ENCODE measurements at regions of chr1 and their contacts with region 1.

Region 1: DNA sequence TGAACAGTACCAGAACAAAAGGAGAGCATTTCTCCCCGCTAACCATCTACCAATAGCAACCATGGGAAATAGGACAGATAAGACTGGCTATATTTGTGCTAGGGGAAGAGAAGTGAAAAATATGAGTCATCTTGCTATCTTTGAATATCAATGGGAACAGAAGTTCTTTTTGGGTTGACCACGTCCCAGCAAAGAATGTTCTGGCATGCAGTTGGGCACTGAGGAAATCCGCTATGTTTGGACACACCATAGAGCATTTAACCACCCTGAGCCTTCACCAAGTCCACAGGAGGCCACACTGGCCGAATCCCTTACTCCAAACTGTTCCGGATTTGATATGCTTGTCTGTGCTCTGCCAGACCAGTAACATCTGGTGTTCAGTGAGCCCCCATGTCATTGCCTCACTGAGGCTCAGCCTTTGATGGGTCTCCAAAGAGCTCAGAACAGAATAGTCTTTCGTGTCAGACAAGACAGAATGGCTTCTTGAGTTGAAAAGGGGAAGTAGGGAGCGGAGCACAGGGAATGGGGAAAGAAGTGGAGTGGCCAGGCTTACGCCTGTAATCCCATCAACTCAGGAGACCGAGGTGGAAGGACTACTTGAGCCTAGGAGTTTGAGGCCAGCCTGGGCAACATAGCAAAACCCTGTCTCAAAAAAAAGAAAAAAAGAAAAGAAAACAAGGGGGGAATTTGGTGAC is 81.4 kb downstream of the SMYD2 start:
- DNase-seq: peak; percentile 81 to 90
- ATAC-seq: peak; percentile 92 to 96
- H3K4me3 ChIP-seq: peak overlapping the region in 2 of 4 donors; percentile 3 to 8
- H3K27ac ChIP-seq: peak overlapping the region; percentile 87 to 97 (median 91)
- H3K4me1 ChIP-seq: peaks cover 40 to 57% of the 10 kb centered on the region in 2 donors
- H3K27me3 ChIP-seq: no peaks in the 10 kb centered on the region
- CTCF ChIP-seq: no peak
- POLR2A ChIP-seq: peak; percentile 24 to 40

Region 2: GRCh38 chr1:214551436-214552173 is 189.3 kb after region 1 on chr1 and contains the start of gene PTPN14:
- in situ Hi-C with region 1: no loop called
- intact Hi-C with region 1: loop called (anchors 1 kb)
- DNase-seq: peak; percentile 64 to 80
- ATAC-seq: peak; percentile 73 to 75
- H3K4me3 ChIP-seq: peak within 1 kb of the TSS; percentile 68 to 96 (median 87)
- H3K27ac ChIP-seq: peak within 1 kb of the TSS; percentile 93 to 99 (median 95)
- H3K4me1 ChIP-seq: peaks cover 37 to 38% of the 10 kb centered on the region in 2 donors
- H3K27me3 ChIP-seq: no peaks in the 10 kb centered on the region
- CTCF ChIP-seq: peak in 3 of 5 experiments; percentile 13 to 39 (median 21)
- POLR2A ChIP-seq: peak; percentile 80 to 82
- total RNA-seq, gene PTPN14: 42.8 to 63.8 (median 50.4) TPM